ENCODE measurements at regions of chr13 and their contacts with region 1.

Region 1: GRCh38 chr13:36999054-36999714 is at the start of gene ALG5:
- DNase-seq: peak; percentile 99
- H3K4me3 Mint-ChIP-seq: peak within 1 kb of the TSS; percentile 99
- H3K27ac Mint-ChIP-seq: peak within 1 kb of the TSS; percentile 100
- H3K4me1 Mint-ChIP-seq: peaks cover 31% of the 10 kb centered on the region
- H3K27me3 Mint-ChIP-seq: no peaks in the 10 kb centered on the region
- total RNA-seq, gene ALG5: 53.6 and 53.8 TPM in 2 replicates

Region 2: DNA sequence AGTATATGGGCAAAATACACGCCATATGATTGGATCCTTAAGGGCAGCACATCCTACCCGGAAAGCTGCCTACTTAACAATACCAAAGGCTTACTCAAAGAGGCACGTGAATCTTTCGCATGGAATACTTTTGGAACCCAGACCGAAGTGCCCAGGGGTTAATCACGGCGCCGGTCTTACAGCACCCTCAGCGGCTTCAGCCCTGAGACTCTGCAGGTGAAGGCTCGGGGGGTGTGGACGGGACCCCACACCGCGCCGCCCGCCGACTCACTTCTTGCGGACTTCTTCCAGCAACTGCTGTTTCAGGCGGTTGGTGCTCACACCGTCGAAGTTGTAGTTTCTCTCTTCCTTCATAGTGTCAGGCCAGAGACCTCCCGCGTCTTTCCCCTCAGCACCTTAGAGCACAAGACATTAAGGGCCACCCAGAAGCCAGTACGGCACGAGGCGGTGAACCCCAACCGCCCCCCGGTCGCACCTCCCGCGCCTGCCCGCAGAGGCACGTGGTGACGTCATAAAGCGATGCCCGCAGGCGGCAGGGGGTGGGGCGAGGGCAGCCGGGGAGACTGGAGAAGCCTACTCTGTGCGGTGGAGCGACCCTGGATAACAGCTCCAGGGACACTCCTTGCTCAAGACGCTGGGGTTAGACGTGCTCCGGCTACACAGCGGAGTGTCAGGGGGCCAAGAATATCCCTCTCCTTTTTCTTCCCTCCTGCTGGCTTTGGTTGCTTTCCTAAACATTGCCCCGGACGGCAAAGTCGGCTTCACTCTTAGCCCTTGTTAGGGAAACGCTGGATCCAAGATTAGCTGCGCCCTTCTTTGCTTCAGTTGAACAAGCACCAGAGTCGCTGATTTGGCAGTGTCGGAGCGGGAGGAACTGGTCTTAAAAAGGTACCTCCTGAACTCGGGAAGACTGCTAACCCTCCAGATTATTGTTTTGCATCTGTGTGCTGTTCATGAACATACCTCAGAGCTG is 701.5 kb before region 1 on chr13 and contains the start of gene CCDC169:
- intact Hi-C with region 1: loop called (anchors 10 kb)
- DNase-seq: peak; percentile 89
- H3K4me3 Mint-ChIP-seq: peak within 1 kb of the TSS; percentile 90
- H3K27ac Mint-ChIP-seq: peak within 1 kb of the TSS; percentile 64
- H3K4me1 Mint-ChIP-seq: peaks cover 11% of the 10 kb centered on the region
- H3K27me3 Mint-ChIP-seq: peaks cover 31% of the 10 kb centered on the region
- total RNA-seq, gene CCDC169: 0.35 and 0.50 TPM in 2 replicates

Region 3: GRCh38 chr13:36431654-36432511 is 567.3 kb before region 1 on chr13 and contains the start of gene CCNA1:
- intact Hi-C with region 1: loop called (anchors 5 kb)
- DNase-seq: peak; percentile 79
- H3K4me3 Mint-ChIP-seq: peak within 1 kb of the TSS; percentile 77
- H3K27ac Mint-ChIP-seq: no peak within 1 kb of the TSS
- H3K4me1 Mint-ChIP-seq: peaks cover 16% of the 10 kb centered on the region
- H3K27me3 Mint-ChIP-seq: peaks cover 47% of the 10 kb centered on the region
- total RNA-seq, gene CCNA1: 2.1 and 2.2 TPM in 2 replicates

Region 4: DNA sequence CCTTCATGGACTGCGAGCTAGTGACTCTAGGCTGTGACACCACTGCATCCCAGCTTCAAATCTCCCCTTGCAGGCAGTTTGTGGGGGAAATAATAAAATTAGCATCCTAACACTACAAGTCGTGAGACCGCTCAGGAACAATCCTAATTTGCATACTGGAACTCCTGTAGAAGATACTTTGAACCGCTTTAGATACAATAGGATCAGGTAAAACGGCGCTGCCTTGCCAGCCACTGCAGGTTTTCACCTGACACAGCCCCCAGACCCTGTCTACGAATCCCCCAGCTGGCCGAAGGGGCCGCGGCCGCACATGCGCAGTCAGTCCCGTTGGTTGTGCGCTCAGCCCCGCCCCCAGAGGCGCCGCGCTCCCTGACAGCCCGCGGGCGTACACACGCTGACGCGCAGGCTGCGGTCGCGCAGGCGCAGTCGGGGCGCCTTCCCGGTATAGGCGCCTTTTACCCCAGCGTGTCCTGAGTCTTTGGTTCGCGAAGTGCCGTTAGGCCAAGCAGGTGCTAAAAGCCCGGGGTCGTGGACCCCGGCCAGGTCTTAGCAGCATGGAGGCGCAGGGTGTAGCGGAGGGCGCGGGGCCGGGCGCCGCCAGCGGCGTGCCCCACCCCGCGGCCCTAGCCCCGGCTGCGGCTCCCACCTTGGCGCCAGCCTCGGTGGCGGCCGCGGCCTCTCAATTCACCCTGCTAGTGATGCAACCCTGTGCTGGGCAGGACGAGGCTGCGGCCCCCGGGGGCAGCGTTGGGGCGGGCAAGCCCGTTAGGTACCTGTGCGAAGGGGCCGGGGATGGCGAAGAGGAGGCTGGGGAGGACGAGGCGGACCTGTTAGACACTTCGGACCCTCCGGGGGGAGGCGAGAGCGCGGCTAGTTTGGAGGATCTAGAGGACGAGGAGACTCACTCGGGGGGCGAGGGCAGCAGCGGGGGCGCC is 180.1 kb before region 1 on chr13 and contains the start of gene RFXAP:
- intact Hi-C with region 1: loop called (anchors 1 kb)
- DNase-seq: peak; percentile 98
- H3K4me3 Mint-ChIP-seq: peak within 1 kb of the TSS; percentile 96
- H3K27ac Mint-ChIP-seq: peak within 1 kb of the TSS; percentile 97
- H3K4me1 Mint-ChIP-seq: peaks cover 45% of the 10 kb centered on the region
- H3K27me3 Mint-ChIP-seq: peaks cover 16% of the 10 kb centered on the region
- total RNA-seq, gene RFXAP: 18.0 and 20.9 TPM in 2 replicates

Region 5: DNA sequence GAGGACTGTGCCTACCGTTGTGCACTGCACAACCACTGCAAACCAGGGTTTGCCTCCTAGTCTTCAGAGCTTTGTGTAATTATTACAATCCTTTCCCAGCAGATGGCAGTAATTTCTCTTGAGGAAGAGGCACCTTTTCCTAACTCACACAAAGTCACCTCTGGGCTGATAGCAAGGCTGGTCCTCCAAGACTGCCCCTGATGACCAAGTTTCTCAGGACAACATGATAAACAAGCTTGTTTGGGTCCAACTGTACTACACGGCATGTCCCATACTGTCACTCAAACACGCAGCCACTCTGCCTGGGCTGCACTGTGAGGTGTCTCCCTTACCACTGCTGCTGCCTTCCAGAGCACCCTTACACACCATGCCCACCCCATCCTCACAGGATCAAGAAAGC is 140.9 kb before region 1 on chr13:
- intact Hi-C with region 1: loop called (anchors 1 kb)
- DNase-seq: peak; percentile 65
- H3K4me3 Mint-ChIP-seq: no peak overlapping the region
- H3K27ac Mint-ChIP-seq: no peak overlapping the region
- H3K4me1 Mint-ChIP-seq: peaks cover 16% of the 10 kb centered on the region
- H3K27me3 Mint-ChIP-seq: peaks cover 8% of the 10 kb centered on the region

Region 6: GRCh38 chr13:37058910-37059847 is 60.0 kb after region 1 on chr13 and contains the start of gene SUPT20H:
- intact Hi-C with region 1: loop called (anchors 1 kb)
- DNase-seq: peak; percentile 97
- H3K4me3 Mint-ChIP-seq: peak within 1 kb of the TSS; percentile 87
- H3K27ac Mint-ChIP-seq: peak within 1 kb of the TSS; percentile 97
- H3K4me1 Mint-ChIP-seq: peaks cover 20% of the 10 kb centered on the region
- H3K27me3 Mint-ChIP-seq: peaks cover 9% of the 10 kb centered on the region
- total RNA-seq, gene SUPT20H: 67.4 and 74.8 TPM in 2 replicates

Region 7: DNA sequence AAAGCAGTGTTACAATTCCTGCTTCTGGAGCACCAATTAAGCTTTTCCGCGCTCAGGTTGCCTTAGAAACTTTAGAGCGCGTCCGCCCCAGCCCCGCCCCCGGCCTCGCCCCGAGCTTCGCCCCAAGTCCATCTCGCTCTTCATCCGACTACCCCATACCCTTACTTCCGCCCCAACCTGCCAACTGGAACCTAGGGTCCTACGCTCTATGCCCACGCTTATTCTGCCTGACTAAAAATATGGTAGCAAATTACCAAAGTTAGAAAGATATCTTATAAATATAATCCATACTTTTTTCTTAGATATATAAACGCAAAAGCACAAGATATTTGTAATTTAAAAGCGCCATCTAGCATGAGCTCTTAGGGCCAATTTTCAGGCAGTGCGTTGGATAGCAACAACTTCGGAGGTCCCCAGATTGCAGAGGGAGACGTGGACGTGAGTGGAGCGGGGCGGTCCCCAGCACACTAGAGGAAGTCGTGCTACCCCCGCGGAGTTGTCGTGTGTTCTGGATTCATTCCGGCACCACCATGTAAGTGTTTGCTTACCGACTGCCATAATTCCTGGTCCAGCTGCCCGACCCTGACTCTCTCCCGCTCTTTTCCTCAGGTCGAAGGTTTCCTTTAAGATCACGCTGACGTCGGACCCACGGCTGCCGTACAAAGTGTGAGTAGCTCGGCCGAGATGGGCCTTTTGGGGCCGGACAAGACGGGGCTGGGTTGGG is 1350.4 kb after region 1 on chr13 and contains the start of gene UFM1:
- intact Hi-C with region 1: loop called (anchors 1 kb)
- DNase-seq: peak; percentile 95
- H3K4me3 Mint-ChIP-seq: peak within 1 kb of the TSS; percentile 99
- H3K27ac Mint-ChIP-seq: peak within 1 kb of the TSS; percentile 99
- H3K4me1 Mint-ChIP-seq: peaks cover 34% of the 10 kb centered on the region
- H3K27me3 Mint-ChIP-seq: no peaks in the 10 kb centered on the region
- total RNA-seq, gene UFM1: 63.5 and 69.4 TPM in 2 replicates